ENCODE measurements at regions of chr12 and their contacts with region 1.

Region 1: DNA sequence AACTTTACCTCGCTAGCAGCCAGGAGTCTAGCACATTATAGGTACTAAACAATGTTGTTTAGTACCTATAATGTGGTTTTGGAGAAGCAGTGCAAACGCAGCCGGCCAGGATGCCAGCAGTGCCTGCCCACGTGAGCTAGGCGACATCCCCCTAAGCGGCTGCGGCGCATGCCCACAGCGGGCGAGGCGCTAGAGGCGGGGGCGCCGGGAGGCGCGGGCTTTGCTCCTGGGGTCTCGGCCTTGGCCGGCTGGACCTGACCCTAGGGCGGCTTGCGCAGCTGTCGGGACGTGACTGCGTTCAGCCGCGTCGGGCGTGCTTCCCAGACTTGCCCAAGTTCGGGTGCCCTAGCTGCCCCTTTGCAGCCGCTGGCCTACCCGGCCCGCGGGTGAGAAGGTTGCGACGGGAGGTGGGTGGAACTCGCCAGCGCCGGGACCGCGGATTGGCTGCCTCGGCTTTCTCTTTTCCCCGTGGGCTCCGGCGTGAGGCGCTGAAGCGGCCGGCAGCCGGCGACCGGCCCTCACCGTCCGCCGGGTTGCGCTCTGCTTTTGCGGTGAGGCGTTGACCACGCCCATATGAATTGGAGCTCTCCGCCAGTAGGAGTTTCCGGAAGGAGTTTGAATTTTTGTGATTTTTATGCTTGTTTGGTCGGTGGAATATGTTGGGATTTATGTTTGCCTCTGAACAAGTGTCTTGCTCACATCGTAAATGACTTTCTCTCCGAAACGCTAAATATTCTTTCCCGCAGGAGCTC is at the start of gene TMEM19:
- DNase-seq: peak; percentile 65
- ATAC-seq: peak; percentile 94
- H3K4me3 ChIP-seq: peak within 1 kb of the TSS; percentile 70
- H3K27ac ChIP-seq: peak within 1 kb of the TSS; percentile 77
- H3K4me1 ChIP-seq: peaks cover 14% of the 10 kb centered on the region
- H3K27me3 ChIP-seq: no peaks in the 10 kb centered on the region
- CTCF ChIP-seq: peak; percentile 25 to 60 (median 33); a peak in 4 of 6 replicates
- EP300 ChIP-seq: no peak
- POLR2A ChIP-seq: peak; percentile 86
- RAD21 ChIP-seq: peak; percentile 44
- polyA plus RNA-seq, gene TMEM19: 32.2 to 54.9 TPM

Region 2: GRCh38 chr12:71636704-71637115 is 49.4 kb before region 1 on chr12:
- CTCF ChIA-PET with region 1: interaction called, 37 read pairs
- POLR2A ChIA-PET with region 1: no interaction called
- RAD21 ChIA-PET with region 1: interaction called, 8 read pairs
- SMC1A ChIA-PET with region 1: interaction called, 11 read pairs
- in situ Hi-C with region 1: no loop called
- intact Hi-C with region 1: no loop called
- DNase-seq: peak; percentile 12
- ATAC-seq: peak; percentile 81
- H3K4me3 ChIP-seq: no peak overlapping the region
- H3K27ac ChIP-seq: no peak overlapping the region
- H3K4me1 ChIP-seq: no peaks in the 10 kb centered on the region; the same call in 1 of the 2 replicates
- H3K27me3 ChIP-seq: no peaks in the 10 kb centered on the region
- CTCF ChIP-seq: peak; percentile 65 to 73 (median 71)
- EP300 ChIP-seq: no peak
- POLR2A ChIP-seq: no peak
- RAD21 ChIP-seq: peak; percentile 63

Region 3: DNA sequence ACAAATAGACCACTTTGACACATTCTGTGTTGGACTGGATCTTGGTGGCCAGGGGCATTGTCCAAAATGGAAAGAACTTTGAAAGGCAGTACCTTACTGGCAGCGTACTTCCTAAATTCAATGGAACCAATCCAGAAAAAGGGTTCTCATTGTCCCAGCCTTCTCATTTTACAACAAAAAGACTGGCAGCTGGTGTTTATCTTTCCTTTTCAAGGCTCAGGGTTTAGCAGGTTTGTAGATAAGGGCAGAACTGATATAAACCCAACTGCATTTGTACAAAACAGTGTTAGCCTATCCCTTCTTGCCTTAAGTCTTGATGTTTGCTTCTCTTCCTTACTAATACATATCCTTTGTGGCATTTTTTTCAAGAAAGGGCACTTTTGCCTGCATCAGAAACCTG is 14.3 kb before region 1 on chr12:
- CTCF ChIA-PET with region 1: interaction called, 14 read pairs
- POLR2A ChIA-PET with region 1: no interaction called
- RAD21 ChIA-PET with region 1: interaction called, 11 read pairs
- SMC1A ChIA-PET with region 1: interaction called, 19 read pairs
- in situ Hi-C with region 1: no loop called
- intact Hi-C with region 1: no loop called
- DNase-seq: no peak
- ATAC-seq: no peak
- H3K4me3 ChIP-seq: no peak overlapping the region
- H3K27ac ChIP-seq: no peak overlapping the region
- H3K4me1 ChIP-seq: no peaks in the 10 kb centered on the region
- H3K27me3 ChIP-seq: no peaks in the 10 kb centered on the region
- CTCF ChIP-seq: no peak
- EP300 ChIP-seq: no peak
- POLR2A ChIP-seq: no peak
- RAD21 ChIP-seq: no peak

Region 4: DNA sequence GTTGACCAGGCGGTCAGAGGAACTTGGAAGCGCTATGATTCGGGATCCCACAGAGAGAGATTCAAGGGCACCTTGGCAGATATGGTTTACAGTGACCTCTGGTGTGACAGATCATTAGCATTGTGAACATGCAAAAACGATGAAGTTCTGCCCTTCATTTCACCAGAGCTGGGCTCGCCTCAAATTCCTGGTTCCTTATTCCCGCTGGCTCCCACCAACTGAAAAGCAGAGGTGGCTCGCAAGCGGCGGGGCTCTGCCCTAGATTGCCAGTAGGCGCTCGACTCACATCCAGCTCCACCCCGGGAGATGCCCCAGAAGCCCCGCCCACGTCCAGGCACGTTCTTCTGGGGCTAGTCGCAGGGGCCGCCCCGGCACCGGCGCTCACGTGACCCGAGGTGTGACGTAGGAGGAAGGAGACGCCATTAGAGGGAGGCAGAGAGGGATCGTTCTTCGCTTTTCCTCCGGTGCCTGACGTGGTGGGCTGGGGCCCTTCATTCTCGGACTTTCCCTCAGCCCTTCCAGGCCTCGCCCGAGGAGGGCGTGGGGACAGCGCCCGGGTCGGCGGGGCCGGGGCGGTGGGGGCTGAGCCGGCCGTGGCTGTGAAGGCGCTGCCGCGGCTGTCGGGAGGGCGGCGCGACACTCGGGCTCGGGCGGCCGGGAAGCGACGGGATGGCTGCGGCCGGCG is 68.5 kb after region 1 on chr12 and contains the start of gene RAB21:
- CTCF ChIA-PET with region 1: interaction called, 131 read pairs
- POLR2A ChIA-PET with region 1: interaction called, 22 read pairs
- RAD21 ChIA-PET with region 1: interaction called, 139 read pairs
- SMC1A ChIA-PET with region 1: interaction called, 117 read pairs
- in situ Hi-C with region 1: no loop called
- intact Hi-C with region 1: loop called (anchors 2 kb)
- DNase-seq: peak; percentile 70
- ATAC-seq: peak; percentile 92
- H3K4me3 ChIP-seq: peak within 1 kb of the TSS; percentile 96
- H3K27ac ChIP-seq: peak within 1 kb of the TSS; percentile 94
- H3K4me1 ChIP-seq: peaks cover 4% of the 10 kb centered on the region
- H3K27me3 ChIP-seq: no peaks in the 10 kb centered on the region; a peak in 1 of 4 replicates
- CTCF ChIP-seq: 0 out of 6 replicates have a peak, but pooled peaks of 1 of the 3 experiments have one; percentile 12
- EP300 ChIP-seq: no peak
- POLR2A ChIP-seq: peak; percentile 93
- RAD21 ChIP-seq: 0 out of 2 replicates have a peak, but pooled peaks have one; percentile 1
- polyA plus RNA-seq, gene RAB21: 5.3 to 8.2 TPM

Region 5: DNA sequence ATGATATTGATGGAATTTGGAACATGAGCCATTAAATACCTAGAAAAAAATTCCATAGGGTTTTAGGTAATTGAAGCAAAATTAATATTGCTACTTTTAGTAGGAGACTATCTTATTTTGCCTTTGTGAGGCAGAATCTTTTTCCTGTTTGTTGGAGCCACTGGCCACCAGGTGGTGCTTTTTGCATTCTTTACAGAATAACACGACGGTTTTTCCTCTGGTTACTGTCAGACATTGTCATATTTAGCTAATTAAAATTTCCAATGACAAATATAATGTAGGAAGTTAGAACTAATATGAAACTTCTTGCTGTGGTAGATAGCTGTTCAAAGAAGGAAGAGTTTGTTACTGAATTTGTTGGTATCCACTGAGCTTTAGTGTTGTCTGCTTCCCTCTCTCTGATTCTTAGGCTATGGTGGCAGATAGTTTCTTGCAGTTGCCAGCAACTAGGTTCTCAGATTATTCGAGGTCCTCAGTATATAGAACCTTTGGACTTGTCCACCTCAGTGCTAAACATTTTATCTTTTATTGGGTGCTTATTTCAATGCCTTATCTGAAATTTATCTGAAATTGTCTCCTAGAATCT is 94.2 kb after region 1 on chr12:
- CTCF ChIA-PET with region 1: no interaction called
- POLR2A ChIA-PET with region 1: interaction called, 3 read pairs
- RAD21 ChIA-PET with region 1: interaction called, 3 read pairs
- SMC1A ChIA-PET with region 1: interaction called, 10 read pairs
- in situ Hi-C with region 1: no loop called
- intact Hi-C with region 1: no loop called
- DNase-seq: no peak
- ATAC-seq: peak; percentile 82
- H3K4me3 ChIP-seq: no peak overlapping the region
- H3K27ac ChIP-seq: no peak overlapping the region
- H3K4me1 ChIP-seq: no peaks in the 10 kb centered on the region
- H3K27me3 ChIP-seq: no peaks in the 10 kb centered on the region
- CTCF ChIP-seq: peak; percentile 55 to 69 (median 58)
- EP300 ChIP-seq: no peak
- POLR2A ChIP-seq: no peak
- RAD21 ChIP-seq: peak; percentile 76

Region 6: GRCh38 chr12:71854594-71854993 is 168.5 kb after region 1 on chr12:
- CTCF ChIA-PET with region 1: no interaction called
- POLR2A ChIA-PET with region 1: no interaction called
- RAD21 ChIA-PET with region 1: no interaction called
- SMC1A ChIA-PET with region 1: no interaction called
- in situ Hi-C with region 1: no loop called
- intact Hi-C with region 1: no loop called
- DNase-seq: no peak
- ATAC-seq: no peak
- H3K4me3 ChIP-seq: no peak overlapping the region
- H3K27ac ChIP-seq: no peak overlapping the region
- H3K4me1 ChIP-seq: no peaks in the 10 kb centered on the region
- H3K27me3 ChIP-seq: no peaks in the 10 kb centered on the region
- CTCF ChIP-seq: no peak
- EP300 ChIP-seq: no peak
- POLR2A ChIP-seq: no peak
- RAD21 ChIP-seq: no peak

Measured in GM12878 (cell line).